CD4-positive, alpha-beta memory T cell (primary cell): ENCODE measurements at regions of chr1 and their contacts with region 1.

Region 1: GRCh38 chr1:34742667-34743270 is 12.1 kb upstream of the GJB5 start:
- DNase-seq: peak; percentile 56 to 63 (median 60)
- H3K4me3 ChIP-seq: no peak overlapping the region
- H3K4me3 Mint-ChIP-seq: peak overlapping the region in 1 of 8 donors; percentile 30
- H3K27ac ChIP-seq: no peak overlapping the region
- H3K27ac Mint-ChIP-seq: no peak overlapping the region
- H3K4me1 ChIP-seq: no peaks in the 10 kb centered on the region
- H3K4me1 Mint-ChIP-seq: peaks cover 0 to 3% (median 0%) of the 10 kb centered on the region in 4 donors
- H3K27me3 ChIP-seq: no peaks in the 10 kb centered on the region
- H3K27me3 Mint-ChIP-seq: peaks cover 0 to 13% of the 10 kb centered on the region in 2 donors

Region 2: GRCh38 chr1:33633019-33633801 is 1109.6 kb before region 1 on chr1:
- CTCF ChIA-PET with region 1: interaction called, 37 read pairs
- POLR2A ChIA-PET with region 1: no interaction called
- intact Hi-C with region 1: loop called (anchors 1 kb)
- DNase-seq: peak; percentile 65 to 76 (median 71)
- H3K4me3 ChIP-seq: no peak overlapping the region
- H3K4me3 Mint-ChIP-seq: peak overlapping the region in 3 of 8 donors; percentile 9 to 41 (median 24)
- H3K27ac ChIP-seq: no peak overlapping the region
- H3K27ac Mint-ChIP-seq: no peak overlapping the region
- H3K4me1 ChIP-seq: no peaks in the 10 kb centered on the region
- H3K4me1 Mint-ChIP-seq: peaks cover 4 to 12% (median 5%) of the 10 kb centered on the region in 4 donors
- H3K27me3 ChIP-seq: no peaks in the 10 kb centered on the region
- H3K27me3 Mint-ChIP-seq: peaks cover 19 to 29% of the 10 kb centered on the region in 2 donors

Region 3: GRCh38 chr1:34460193-34460592 is 282.6 kb before region 1 on chr1:
- CTCF ChIA-PET with region 1: interaction called, 41 read pairs
- POLR2A ChIA-PET with region 1: no interaction called
- intact Hi-C with region 1: no loop called
- DNase-seq: peak in 4 of 5 donors; percentile 9 to 15 (median 14)
- H3K4me3 ChIP-seq: no peak overlapping the region
- H3K4me3 Mint-ChIP-seq: no peak overlapping the region
- H3K27ac ChIP-seq: no peak overlapping the region
- H3K27ac Mint-ChIP-seq: no peak overlapping the region
- H3K4me1 ChIP-seq: no peaks in the 10 kb centered on the region
- H3K4me1 Mint-ChIP-seq: no peaks in the 10 kb centered on the region
- H3K27me3 ChIP-seq: no peaks in the 10 kb centered on the region
- H3K27me3 Mint-ChIP-seq: peaks cover 5 to 8% of the 10 kb centered on the region in 2 donors

Region 4: DNA sequence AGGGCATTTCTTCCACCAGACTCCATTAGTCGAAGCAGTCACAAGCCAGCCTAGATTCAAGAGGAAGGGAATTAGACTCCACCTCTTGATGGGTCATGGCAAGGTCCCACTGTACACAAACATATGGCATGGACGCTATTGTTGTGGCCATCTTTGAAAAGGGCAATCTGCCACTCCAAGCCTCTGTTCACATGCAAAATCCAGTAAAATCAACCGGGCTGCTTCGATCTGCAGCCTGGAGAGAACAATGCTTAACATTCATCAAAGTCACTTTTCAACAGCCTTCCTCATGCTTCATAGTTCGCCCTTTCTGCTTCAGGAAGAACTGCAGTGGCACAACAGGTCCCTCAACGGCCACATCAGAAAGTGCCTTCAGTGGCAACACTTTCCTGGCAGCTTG is 15.9 kb before region 1 on chr1:
- CTCF ChIA-PET with region 1: interaction called, 18 read pairs
- POLR2A ChIA-PET with region 1: no interaction called
- intact Hi-C with region 1: no loop called
- DNase-seq: no peak
- H3K4me3 ChIP-seq: no peak overlapping the region
- H3K4me3 Mint-ChIP-seq: no peak overlapping the region
- H3K27ac ChIP-seq: no peak overlapping the region
- H3K27ac Mint-ChIP-seq: no peak overlapping the region
- H3K4me1 ChIP-seq: no peaks in the 10 kb centered on the region
- H3K4me1 Mint-ChIP-seq: no peaks in the 10 kb centered on the region
- H3K27me3 ChIP-seq: no peaks in the 10 kb centered on the region
- H3K27me3 Mint-ChIP-seq: peaks cover 24 to 30% of the 10 kb centered on the region in 2 donors

Region 5: DNA sequence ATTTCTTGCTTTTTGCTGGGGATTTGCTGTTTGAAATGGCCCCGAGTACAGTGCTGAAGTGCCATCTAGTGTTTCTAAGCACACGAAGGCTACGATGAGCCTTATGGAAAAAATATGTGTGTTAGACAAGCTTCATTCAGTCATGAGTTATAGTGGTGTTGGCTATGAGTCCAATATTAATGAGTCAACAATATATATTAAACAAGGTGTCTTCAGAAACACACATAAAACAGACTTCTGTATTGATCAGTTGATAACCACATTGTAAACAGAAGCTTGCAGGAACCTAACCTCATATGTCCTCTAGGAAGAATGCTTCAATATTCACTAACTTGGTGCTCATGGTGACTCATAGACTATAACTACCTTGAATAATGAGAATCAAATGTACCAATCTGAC is 10.4 kb after region 1 on chr1:
- CTCF ChIA-PET with region 1: interaction called, 23 read pairs
- POLR2A ChIA-PET with region 1: no interaction called
- intact Hi-C with region 1: no loop called
- DNase-seq: no peak
- H3K4me3 ChIP-seq: no peak overlapping the region
- H3K4me3 Mint-ChIP-seq: no peak overlapping the region
- H3K27ac ChIP-seq: no peak overlapping the region
- H3K27ac Mint-ChIP-seq: no peak overlapping the region
- H3K4me1 ChIP-seq: no peaks in the 10 kb centered on the region
- H3K4me1 Mint-ChIP-seq: no peaks in the 10 kb centered on the region
- H3K27me3 ChIP-seq: no peaks in the 10 kb centered on the region
- H3K27me3 Mint-ChIP-seq: peaks cover 13 to 16% of the 10 kb centered on the region in 2 donors